Activated T-helper 2 cell treated with anti-CD3 and anti-CD28 coated beads, Interferon-gamma antibody, Interleukin-2, Interleukin-4, amounts not matched to agents 10 μg/mL and 5 μg/mL and 100 μg/mL, durations not matched to agents 14 hours and 24 hours and 36 hours (primary cell): ENCODE measurements at regions of chr11 and their contacts with region 1.

Region 1: GRCh38 chr11:57530596-57531507 is at the start of gene TIMM10:
- DNase-seq: peak; percentile 93
- H3K4me3 Mint-ChIP-seq: peak within 1 kb of the TSS; percentile 91
- H3K27ac Mint-ChIP-seq: peak within 1 kb of the TSS; percentile 93
- H3K4me1 Mint-ChIP-seq: peaks cover 27% of the 10 kb centered on the region
- H3K27me3 Mint-ChIP-seq: no peaks in the 10 kb centered on the region
- total RNA-seq, gene TIMM10: 76.9 and 90.0 TPM in 2 replicates

Region 2: GRCh38 chr11:57196596-57196995 is 334.3 kb before region 1 on chr11:
- intact Hi-C with region 1: no loop called
- DNase-seq: no peak
- H3K4me3 Mint-ChIP-seq: no peak overlapping the region
- H3K27ac Mint-ChIP-seq: no peak overlapping the region
- H3K4me1 Mint-ChIP-seq: no peaks in the 10 kb centered on the region
- H3K27me3 Mint-ChIP-seq: peaks cover 4% of the 10 kb centered on the region

Region 3: DNA sequence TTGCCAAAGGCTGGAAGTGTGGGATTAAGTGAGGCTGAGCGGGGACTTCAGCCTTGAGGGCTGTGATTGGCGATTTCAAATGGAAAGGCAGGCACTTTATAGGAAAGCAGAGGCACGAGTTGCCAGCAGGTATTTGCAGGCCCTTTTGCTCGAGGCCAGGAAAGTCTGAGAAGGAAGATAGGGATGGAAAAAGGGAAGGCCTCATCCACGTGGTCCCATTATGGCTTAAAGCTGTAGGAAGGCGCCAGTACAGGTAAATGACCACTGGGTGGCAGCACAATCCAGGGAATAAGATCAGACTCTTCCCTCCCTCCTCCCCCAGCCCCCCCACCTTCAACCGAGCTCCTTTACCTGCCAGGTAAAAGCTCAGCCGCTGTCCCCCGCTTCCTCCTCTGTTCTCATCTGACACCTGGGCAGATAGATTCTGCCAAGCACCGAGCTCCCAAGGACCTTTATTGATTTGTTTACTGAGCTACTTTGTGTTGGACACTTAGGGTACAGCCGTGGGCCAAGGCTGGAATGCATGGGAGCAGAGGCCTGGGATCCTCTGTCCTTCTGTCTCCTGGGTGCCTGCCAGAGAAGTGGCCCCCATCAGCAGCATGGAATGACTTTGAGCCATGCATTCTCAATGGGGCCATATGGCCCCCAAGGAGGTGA is 185.2 kb before region 1 on chr11:
- intact Hi-C with region 1: loop called (anchors 1 kb)
- DNase-seq: no peak
- H3K4me3 Mint-ChIP-seq: no peak overlapping the region
- H3K27ac Mint-ChIP-seq: no peak overlapping the region
- H3K4me1 Mint-ChIP-seq: no peaks in the 10 kb centered on the region
- H3K27me3 Mint-ChIP-seq: peaks cover 1% of the 10 kb centered on the region

Region 4: DNA sequence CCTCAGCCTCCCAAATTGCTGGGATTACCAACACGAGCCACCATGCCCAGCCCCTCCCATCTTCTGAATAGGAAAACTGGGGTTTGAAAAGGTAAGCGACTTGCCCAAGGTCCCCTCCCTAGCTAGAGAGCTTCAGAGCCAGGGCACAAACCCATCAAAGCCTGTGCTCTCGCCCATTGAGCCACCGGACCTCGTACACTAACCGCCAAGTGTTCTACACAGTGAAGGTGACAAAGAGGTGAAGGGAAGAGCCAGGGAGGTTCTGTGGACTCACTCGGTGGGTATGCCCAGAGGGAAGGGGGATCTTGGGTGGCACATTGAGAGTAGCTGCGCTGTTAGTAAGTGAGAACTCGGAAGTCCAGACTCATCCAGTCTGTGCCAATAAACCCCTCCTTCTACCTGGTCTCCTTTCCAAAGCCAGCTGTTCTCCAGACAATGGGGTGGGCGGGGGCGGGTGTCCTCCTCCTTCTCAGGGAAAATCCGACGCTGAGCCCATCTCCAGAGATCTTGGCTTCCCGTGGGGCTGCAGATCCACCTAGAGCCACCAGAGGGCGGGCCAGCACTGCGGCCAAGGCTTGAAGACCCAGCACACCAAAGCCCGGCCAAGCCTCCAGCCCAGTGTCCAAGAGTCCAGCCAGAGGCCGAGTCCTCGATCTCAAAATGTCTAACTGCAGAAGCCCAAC is 73.8 kb before region 1 on chr11:
- intact Hi-C with region 1: loop called (anchors 1 kb)
- DNase-seq: peak; percentile 63
- H3K4me3 Mint-ChIP-seq: peak overlapping the region; percentile 9
- H3K27ac Mint-ChIP-seq: no peak overlapping the region
- H3K4me1 Mint-ChIP-seq: peaks cover 22% of the 10 kb centered on the region
- H3K27me3 Mint-ChIP-seq: peaks cover 49% of the 10 kb centered on the region

Region 5: DNA sequence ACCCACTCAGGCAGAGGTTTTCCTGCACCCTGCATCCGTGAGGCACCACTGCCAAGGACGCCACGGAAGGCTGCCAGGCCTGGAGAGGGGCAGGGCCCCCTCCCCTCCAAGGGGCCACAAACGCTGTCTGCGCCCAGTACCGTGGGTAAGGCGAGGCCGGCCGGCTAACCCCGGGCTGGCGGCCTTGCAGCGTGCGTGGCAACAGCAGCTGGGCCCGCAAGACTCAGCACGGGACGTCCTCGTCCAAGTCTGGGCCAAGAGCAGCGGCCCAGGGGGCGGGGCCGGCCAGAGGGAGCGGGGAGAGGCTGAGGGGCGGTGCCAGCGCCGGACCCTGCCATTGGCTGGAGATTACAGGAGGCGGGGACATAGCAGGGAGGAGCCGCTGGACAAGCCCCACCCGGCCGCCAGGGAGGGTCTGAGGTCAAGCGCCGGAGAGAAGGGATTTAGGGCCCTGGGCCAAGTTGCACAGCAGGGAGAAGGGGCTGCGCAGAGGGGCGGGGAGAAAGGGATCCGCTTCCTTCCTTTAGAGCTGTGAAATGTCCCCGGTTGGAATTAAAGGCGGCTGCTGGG is 31.4 kb before region 1 on chr11:
- intact Hi-C with region 1: no loop called
- DNase-seq: peak; percentile 26
- H3K4me3 Mint-ChIP-seq: no peak overlapping the region
- H3K27ac Mint-ChIP-seq: no peak overlapping the region
- H3K4me1 Mint-ChIP-seq: no peaks in the 10 kb centered on the region
- H3K27me3 Mint-ChIP-seq: no peaks in the 10 kb centered on the region

Region 6: GRCh38 chr11:57515332-57516060 is 15.4 kb before region 1 on chr11 and contains the start of gene SLC43A1:
- intact Hi-C with region 1: loop called (anchors 2 kb)
- DNase-seq: peak; percentile 35
- H3K4me3 Mint-ChIP-seq: peak within 1 kb of the TSS; percentile 99
- H3K27ac Mint-ChIP-seq: peak within 1 kb of the TSS; percentile 83
- H3K4me1 Mint-ChIP-seq: peaks cover 26% of the 10 kb centered on the region
- H3K27me3 Mint-ChIP-seq: no peaks in the 10 kb centered on the region
- total RNA-seq, gene SLC43A1: 27.6 and 30.9 TPM in 2 replicates

Region 7: DNA sequence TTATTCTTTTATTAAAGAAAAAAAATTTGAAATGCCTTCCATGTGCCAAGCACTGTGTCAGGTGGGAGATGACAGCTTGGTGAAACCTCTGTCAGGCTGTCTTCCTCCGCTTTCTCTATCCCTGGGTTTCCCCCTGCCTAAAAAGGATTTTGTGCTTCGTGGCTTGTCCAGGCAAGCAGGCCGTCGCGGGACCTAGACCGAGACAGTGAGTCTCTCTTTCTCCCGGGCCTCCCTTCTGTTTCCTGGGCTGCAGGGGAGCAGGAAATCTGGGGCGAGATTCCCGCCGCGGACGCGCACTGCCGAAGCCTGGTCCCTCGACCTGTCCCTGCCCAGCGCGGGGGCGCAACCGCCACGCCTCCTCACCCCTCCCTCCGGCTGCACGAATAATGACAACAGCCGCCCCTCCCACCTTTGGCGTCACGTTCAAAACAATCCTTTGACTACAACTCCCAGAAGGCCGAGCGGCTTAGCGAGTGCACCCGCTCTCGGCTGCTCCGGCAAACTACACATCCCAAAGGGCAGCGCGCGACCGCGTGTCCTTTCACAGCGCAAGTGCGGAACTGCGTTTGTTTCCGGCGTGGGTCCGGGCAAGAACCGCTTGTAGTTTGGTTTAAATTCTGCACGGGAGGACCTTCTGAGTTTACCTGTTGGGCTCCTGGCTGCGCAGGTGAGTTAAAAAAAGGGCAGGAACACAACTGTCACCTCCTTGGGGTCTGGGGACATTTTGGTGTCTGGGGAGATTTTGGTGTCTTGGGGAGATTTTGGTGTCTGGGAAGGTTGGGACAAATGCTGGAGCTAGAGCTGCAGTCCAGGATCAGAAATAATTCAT is 126.6 kb after region 1 on chr11 and contains the start of gene CLP1:
- intact Hi-C with region 1: loop called (anchors 2 kb)
- DNase-seq: peak; percentile 99
- H3K4me3 Mint-ChIP-seq: peak within 1 kb of the TSS; percentile 99
- H3K27ac Mint-ChIP-seq: peak within 1 kb of the TSS; percentile 94
- H3K4me1 Mint-ChIP-seq: peaks cover 26% of the 10 kb centered on the region
- H3K27me3 Mint-ChIP-seq: no peaks in the 10 kb centered on the region
- total RNA-seq, gene CLP1: 17.7 and 19.9 TPM in 2 replicates

Region 8: DNA sequence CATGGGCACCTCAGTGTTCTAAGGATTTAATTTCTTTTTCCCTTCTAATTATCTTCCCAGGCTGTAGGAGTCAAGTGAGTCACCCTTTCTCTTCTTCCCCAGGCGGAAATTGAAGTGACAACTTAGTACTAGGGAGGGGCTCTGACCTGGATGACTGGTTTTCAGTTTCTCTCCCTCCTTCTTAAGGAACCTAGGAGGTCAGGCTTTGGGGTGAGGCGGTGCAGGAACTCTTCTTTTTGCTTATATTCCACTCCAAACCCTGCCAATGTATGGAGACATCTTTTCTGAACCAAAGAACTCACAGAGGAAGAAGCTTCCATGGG is 149.7 kb after region 1 on chr11:
- intact Hi-C with region 1: no loop called
- DNase-seq: no peak
- H3K4me3 Mint-ChIP-seq: no peak overlapping the region
- H3K27ac Mint-ChIP-seq: peak overlapping the region; percentile 65
- H3K4me1 Mint-ChIP-seq: peaks cover 33% of the 10 kb centered on the region
- H3K27me3 Mint-ChIP-seq: no peaks in the 10 kb centered on the region

Region 9: GRCh38 chr11:57712256-57713150 is 181.7 kb after region 1 on chr11 and contains the start of gene TMX2:
- intact Hi-C with region 1: loop called (anchors 1 kb)
- DNase-seq: peak; percentile 90
- H3K4me3 Mint-ChIP-seq: peak within 1 kb of the TSS; percentile 99
- H3K27ac Mint-ChIP-seq: peak within 1 kb of the TSS; percentile 94
- H3K4me1 Mint-ChIP-seq: peaks cover 35% of the 10 kb centered on the region
- H3K27me3 Mint-ChIP-seq: no peaks in the 10 kb centered on the region
- total RNA-seq, gene TMX2: 74.6 and 80.0 TPM in 2 replicates